Dendritic cell treated with granulocyte-macrophage colony-stimulating factor and Interleukin-4, amounts not matched to agents 40 ng/mL and 50 ng/mL, for 4 days (primary cell): ENCODE measurements at regions of chr12 and their contacts with region 1.

Region 1: DNA sequence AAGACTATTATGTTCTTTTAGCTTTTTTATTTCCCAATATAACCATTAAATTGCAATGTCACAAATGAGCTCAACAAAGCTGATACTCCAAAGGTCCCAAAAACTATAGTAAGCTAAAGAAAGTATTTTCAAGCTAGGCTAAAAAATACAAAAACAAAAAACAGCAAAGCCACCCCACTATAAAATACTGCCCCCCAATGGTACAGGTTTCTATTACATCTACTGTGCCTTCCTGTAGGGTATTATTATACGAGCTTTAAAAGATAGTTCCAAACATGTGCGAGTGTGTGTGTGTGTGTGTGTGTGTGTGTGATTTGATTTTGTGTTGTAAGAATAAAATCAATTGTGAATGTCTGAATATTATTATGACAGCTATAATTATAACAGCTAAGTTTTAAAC is 1.1 kb downstream of the IFNG start:
- H3K4me3 Mint-ChIP-seq: no peak overlapping the region
- H3K27ac Mint-ChIP-seq: no peak overlapping the region
- H3K4me1 Mint-ChIP-seq: no peaks in the 10 kb centered on the region
- H3K27me3 Mint-ChIP-seq: no peaks in the 10 kb centered on the region

Region 2: GRCh38 chr12:68040450-68041075 is 117.9 kb before region 1 on chr12:
- intact Hi-C with region 1: loop called (anchors 2 kb)
- H3K4me3 Mint-ChIP-seq: no peak overlapping the region
- H3K27ac Mint-ChIP-seq: no peak overlapping the region
- H3K4me1 Mint-ChIP-seq: peaks cover 5% of the 10 kb centered on the region
- H3K27me3 Mint-ChIP-seq: no peaks in the 10 kb centered on the region